ENCODE measurements at regions of chr5 and their contacts with region 1.

Region 1: DNA sequence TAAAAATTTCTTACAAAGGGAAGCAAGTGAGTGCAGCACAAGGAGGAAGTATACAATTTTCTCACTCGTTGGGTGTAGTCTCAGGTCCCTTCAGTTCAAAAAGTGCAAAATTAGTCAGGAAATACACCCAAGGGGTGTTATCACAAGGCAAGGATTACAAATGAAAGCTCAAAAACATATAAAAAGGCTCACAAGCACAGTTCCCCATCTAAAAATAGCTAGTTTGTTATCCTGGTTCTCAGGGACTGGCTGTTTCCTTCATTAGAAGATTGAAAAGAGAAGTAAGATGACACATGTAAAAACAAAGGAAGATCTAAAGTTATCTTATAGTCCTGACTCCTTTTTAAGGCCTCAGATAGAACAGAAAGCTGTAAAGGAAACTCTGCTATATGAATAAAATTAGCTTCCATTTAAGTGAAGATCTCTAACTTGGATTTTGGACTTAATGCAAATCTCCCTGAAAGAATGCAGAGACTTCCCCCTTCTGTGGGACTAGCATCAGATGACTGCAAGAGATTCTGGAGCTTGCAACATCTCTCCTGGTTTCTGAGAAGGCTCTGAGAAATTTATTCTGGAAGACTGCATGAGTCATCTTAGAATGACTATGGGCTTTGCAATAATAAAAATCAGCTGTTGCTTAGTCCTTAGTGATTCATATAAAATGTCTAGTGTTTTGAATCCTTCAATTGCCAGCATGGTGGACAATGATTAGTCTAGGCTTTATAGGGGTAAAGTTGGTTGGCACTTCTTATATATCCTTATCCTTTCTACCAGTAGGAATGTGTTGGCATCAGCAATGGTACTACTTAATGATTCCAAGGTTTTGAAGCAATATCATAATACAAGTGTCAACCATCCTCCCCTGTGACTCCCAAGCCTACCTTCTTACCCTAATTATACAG is 25.4 kb downstream of the DAB2 start:
- DNase-seq: peak; percentile 60 to 97
- H3K4me3 ChIP-seq: no peak overlapping the region
- H3K27ac ChIP-seq: peak overlapping the region; percentile 90
- H3K4me1 ChIP-seq: peaks cover 31% of the 10 kb centered on the region
- H3K27me3 ChIP-seq: no peaks in the 10 kb centered on the region
- CTCF ChIP-seq: no peak

Region 2: GRCh38 chr5:39376293-39376714 is 23.1 kb before region 1 on chr5:
- CTCF ChIA-PET with region 1: interaction called, 10 read pairs
- POLR2A ChIA-PET with region 1: no interaction called
- intact Hi-C with region 1: no loop called
- DNase-seq: peak; percentile 63 to 66
- H3K4me3 ChIP-seq: no peak overlapping the region
- H3K27ac ChIP-seq: no peak overlapping the region
- H3K4me1 ChIP-seq: no peaks in the 10 kb centered on the region
- H3K27me3 ChIP-seq: no peaks in the 10 kb centered on the region
- CTCF ChIP-seq: peak; percentile 96